Mammary epithelial cell (primary cell): ENCODE measurements at regions of chr10 and their contacts with region 1.

Region 1: GRCh38 chr10:28120043-28120749 is 121.3 kb upstream of the ODAD2 start:
- DNase-seq: no peak
- H3K4me3 ChIP-seq: no peak overlapping the region
- H3K27ac ChIP-seq: no peak overlapping the region
- H3K4me1 ChIP-seq: peaks cover 4% of the 10 kb centered on the region
- H3K27me3 ChIP-seq: no peaks in the 10 kb centered on the region
- CTCF ChIP-seq: no peak

Region 2: DNA sequence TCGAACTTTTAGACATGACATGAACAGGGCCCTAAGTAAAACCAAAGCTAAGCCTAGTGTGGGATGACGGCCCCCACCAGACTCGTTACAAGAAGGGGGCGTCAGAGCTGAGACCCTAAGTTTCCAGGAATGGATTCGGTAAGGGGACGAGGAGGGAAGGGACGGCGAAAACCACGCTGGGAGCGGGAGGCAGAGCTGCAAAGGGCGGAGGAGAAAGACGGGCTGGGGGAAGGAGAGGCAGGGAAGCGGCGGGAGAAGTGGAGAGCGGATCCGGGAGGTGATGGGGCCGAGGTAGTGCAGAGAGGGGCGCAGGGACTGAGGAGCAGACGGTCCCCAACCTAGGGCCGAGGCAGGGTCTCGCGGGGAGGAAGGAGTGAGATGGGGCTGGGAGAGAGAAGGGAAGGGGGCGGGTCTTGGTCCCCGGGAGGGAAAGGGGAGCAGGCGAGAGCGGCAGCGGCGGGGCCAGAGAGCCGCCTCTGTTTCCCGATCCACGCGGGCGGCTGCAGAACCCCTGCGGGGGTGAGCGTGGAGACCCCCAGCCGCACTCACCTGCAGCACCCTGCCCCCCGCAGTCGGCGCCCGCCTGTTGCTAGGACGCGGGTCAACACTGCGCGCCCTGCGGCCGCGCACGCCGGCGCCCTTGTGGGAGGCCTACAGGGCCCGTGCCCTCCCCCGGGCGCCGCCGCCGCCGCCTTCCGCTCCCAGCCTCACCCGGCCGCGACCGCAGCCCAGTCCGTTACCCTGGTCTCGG is 121.8 kb before region 1 on chr10:
- CTCF ChIA-PET with region 1: no interaction called
- dilution Hi-C with region 1: no loop called
- in situ Hi-C with region 1: no loop called
- intact Hi-C with region 1: loop called (anchors 10 kb)
- DNase-seq: peak; percentile 3
- H3K4me3 ChIP-seq: peak overlapping the region; percentile 16 to 51 (median 51)
- H3K27ac ChIP-seq: no peak overlapping the region
- H3K4me1 ChIP-seq: peaks cover 8% of the 10 kb centered on the region
- H3K27me3 ChIP-seq: peaks cover 9% of the 10 kb centered on the region
- CTCF ChIP-seq: no peak

Region 3: DNA sequence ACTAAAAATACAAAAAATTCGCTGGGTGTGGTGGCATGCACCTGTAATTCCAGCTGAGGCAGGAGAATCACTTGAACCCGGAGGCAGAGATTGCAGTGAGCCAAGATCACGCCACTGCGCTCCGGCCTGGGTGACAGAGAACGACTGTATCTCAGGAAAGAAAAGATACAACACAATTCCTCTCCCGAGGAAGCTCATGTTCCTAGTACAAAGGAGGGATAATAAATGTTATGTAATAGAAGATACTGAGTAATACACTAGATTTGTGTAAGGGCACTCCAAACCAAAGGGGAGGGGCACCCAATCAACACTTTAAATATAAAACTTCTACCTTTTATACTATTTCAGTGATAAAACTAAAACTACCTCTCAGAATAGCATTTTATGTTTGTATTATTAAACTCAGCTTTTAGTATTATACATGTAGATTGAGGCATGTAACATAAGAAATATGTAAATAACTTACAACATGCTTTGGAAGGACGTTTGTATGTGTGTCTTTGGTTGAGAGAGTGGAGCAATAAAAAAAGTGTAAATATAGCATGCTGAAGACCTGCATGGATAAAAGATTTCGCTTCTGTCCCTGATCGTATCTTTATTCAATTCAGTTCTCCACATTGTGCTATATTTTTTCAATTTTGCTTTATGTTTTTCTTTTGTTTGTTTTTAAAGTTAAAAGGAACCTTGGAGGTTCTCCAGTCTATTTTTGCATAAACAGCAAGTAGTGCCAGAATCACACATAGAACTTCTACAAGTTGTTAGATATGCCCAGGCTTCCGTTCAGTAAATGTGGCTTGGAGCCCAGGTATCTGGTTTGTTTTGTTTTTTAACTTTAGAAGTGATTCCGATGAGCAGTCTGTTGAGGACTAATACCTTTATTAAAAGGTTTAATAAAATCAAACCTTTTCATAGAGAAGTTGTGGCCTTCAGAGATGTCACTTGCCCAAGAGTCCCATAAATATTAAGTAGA is 484.7 kb after region 1 on chr10:
- CTCF ChIA-PET with region 1: no interaction called
- dilution Hi-C with region 1: no loop called
- in situ Hi-C with region 1: no loop called
- intact Hi-C with region 1: no loop called
- DNase-seq: no peak
- H3K4me3 ChIP-seq: no peak overlapping the region
- H3K27ac ChIP-seq: no peak overlapping the region
- H3K4me1 ChIP-seq: no peaks in the 10 kb centered on the region
- H3K27me3 ChIP-seq: no peaks in the 10 kb centered on the region
- CTCF ChIP-seq: no peak